Calu3 (cell line): ENCODE measurements at regions of chr7 and their contacts with region 1.

Region 1: GRCh38 chr7:151448261-151449252 is 8.6 kb upstream of the CRYGN start:
- DNase-seq: peak; percentile 81
- H3K4me3 Mint-ChIP-seq: peak overlapping the region; percentile 54
- H3K27ac Mint-ChIP-seq: no peak overlapping the region
- H3K4me1 Mint-ChIP-seq: no peaks in the 10 kb centered on the region
- H3K27me3 Mint-ChIP-seq: peaks cover 49% of the 10 kb centered on the region
- CTCF ChIP-seq: peak; percentile 72

Region 2: DNA sequence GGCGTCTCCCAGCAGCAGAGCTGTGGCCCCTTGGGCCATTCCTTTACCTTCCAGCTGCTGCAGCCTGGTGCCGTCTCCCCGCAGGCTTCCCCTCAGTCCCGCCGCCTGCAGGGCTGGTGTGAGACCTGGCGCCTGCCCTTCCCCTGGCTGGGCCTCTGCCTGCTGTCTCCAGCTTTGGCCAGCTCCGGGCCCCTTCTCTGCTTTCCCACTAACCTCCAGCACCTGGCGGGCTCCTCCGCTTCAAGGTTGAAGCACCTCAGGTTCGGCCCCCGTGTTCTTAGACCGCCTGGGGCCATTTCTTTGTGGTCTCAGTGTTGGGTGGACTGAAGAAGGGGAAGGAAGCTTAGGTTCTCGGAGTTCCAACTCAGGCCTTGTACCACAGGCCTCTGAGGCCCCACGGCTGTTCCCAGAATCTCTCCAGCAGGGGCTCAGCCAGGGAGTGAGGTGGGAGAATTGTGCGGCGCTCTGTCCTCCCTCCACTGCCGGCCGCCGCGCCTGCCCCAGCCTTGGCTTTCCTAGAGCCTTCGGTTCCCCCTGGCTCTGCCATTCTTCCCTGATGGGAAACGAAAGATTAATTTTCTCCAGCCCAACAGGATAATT is 311.4 kb before region 1 on chr7:
- CTCF ChIA-PET with region 1: no interaction called
- intact Hi-C with region 1: no loop called
- DNase-seq: no peak
- H3K4me3 Mint-ChIP-seq: no peak overlapping the region
- H3K27ac Mint-ChIP-seq: no peak overlapping the region
- H3K4me1 Mint-ChIP-seq: no peaks in the 10 kb centered on the region
- H3K27me3 Mint-ChIP-seq: no peaks in the 10 kb centered on the region
- CTCF ChIP-seq: no peak

Region 3: GRCh38 chr7:151315038-151315655 is 133.4 kb before region 1 on chr7:
- CTCF ChIA-PET with region 1: no interaction called
- intact Hi-C with region 1: loop called (anchors 1 kb)
- DNase-seq: peak; percentile 85
- H3K4me3 Mint-ChIP-seq: no peak overlapping the region
- H3K27ac Mint-ChIP-seq: no peak overlapping the region
- H3K4me1 Mint-ChIP-seq: no peaks in the 10 kb centered on the region
- H3K27me3 Mint-ChIP-seq: peaks cover 16% of the 10 kb centered on the region
- CTCF ChIP-seq: peak; percentile 75

Region 4: DNA sequence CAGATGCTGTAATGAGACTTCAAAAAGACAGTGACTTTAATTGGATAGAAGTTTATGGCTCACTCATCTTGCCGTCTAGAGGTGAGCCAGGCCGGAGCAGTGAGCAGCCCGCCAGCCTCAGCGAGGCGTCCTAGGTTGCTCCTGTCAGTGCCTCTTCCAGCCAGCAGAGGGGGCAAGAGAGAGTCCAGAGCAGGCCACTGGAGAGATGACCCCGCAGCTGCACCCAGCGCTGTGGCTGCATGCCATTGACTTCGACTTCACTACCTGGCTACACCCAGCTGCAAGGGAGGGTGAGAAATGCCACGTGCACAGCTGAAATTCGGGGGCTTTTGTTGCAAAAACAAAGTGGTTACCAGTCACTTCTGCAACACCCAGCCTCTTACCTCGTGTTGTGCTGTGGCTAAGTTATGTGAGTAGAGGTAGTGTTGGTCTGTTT is 80.4 kb before region 1 on chr7:
- CTCF ChIA-PET with region 1: interaction called, 14 read pairs
- intact Hi-C with region 1: loop called (anchors 1 kb)
- DNase-seq: peak; percentile 88
- H3K4me3 Mint-ChIP-seq: no peak overlapping the region
- H3K27ac Mint-ChIP-seq: no peak overlapping the region
- H3K4me1 Mint-ChIP-seq: no peaks in the 10 kb centered on the region
- H3K27me3 Mint-ChIP-seq: no peaks in the 10 kb centered on the region
- CTCF ChIP-seq: peak; percentile 86

Region 5: DNA sequence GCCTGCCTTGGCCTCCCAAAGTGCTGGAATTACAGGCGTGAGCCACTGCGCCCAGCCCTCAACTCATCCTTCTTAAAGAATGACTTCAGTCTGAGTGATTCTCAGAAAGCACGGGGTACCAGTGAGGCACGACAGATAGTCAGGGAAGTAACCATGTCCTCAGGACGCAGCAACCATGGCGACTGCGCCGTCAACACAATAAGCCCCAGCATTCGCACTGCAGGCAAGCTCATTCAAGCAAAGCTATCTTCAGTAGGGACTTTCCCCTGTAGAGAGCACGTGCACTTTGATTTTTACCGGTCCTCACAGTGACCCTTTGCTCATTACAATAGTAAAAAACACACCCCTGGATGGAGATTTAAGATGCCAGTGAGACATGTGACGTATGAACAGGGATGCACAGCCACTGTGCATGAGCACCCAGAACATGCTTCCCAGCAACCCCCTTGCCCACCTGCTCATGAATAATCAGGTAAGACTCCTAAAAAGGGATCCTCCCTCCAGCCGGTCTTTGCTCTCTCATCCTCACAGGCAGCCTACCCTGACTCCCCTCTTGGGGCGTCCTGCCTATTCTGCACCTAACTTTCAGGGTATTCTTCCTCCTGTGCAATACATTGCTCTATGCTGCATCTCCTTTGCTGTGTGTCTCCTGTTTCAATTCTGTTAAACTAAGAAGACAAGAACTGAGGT is 47.8 kb before region 1 on chr7:
- CTCF ChIA-PET with region 1: interaction called, 3 read pairs
- intact Hi-C with region 1: loop called (anchors 5 kb)
- DNase-seq: no peak
- H3K4me3 Mint-ChIP-seq: no peak overlapping the region
- H3K27ac Mint-ChIP-seq: no peak overlapping the region
- H3K4me1 Mint-ChIP-seq: peaks cover 10% of the 10 kb centered on the region
- H3K27me3 Mint-ChIP-seq: peaks cover 45% of the 10 kb centered on the region
- CTCF ChIP-seq: no peak

Region 6: GRCh38 chr7:151790830-151791620 is 342.5 kb after region 1 on chr7:
- CTCF ChIA-PET with region 1: no interaction called
- intact Hi-C with region 1: no loop called
- DNase-seq: no peak
- H3K4me3 Mint-ChIP-seq: no peak overlapping the region
- H3K27ac Mint-ChIP-seq: no peak overlapping the region
- H3K4me1 Mint-ChIP-seq: peaks cover 1% of the 10 kb centered on the region
- H3K27me3 Mint-ChIP-seq: peaks cover 58% of the 10 kb centered on the region
- CTCF ChIP-seq: no peak